ENCODE measurements at regions of chr1 and their contacts with region 1.

Region 1: GRCh38 chr1:214213136-214213535 is 67.8 kb upstream of the SMYD2 start:
- DNase-seq: no peak
- H3K4me3 ChIP-seq: no peak overlapping the region
- H3K27ac ChIP-seq: no peak overlapping the region
- H3K4me1 ChIP-seq: peaks cover 0 to 6% (median 5%) of the 10 kb centered on the region in 4 experiments
- H3K27me3 ChIP-seq: peaks cover 0 to 12% (median 6%) of the 10 kb centered on the region in 5 experiments

Region 2: GRCh38 chr1:214186103-214186824 is 26.9 kb before region 1 on chr1:
- CTCF ChIA-PET with region 1: no interaction called
- POLR2A ChIA-PET with region 1: no interaction called
- DNase-seq: peak in 2 of 3 donors; percentile 4 to 11
- H3K4me3 ChIP-seq: no peak overlapping the region
- H3K27ac ChIP-seq: no peak overlapping the region
- H3K4me1 ChIP-seq: peaks cover 0 to 8% (median 5%) of the 10 kb centered on the region in 4 experiments
- H3K27me3 ChIP-seq: peaks cover 22 to 70% (median 34%) of the 10 kb centered on the region in 5 experiments

Region 3: GRCh38 chr1:214198571-214198970 is 14.6 kb before region 1 on chr1:
- CTCF ChIA-PET with region 1: interaction called, 12 read pairs
- POLR2A ChIA-PET with region 1: no interaction called
- DNase-seq: peak in 2 of 3 donors; percentile 36 to 38
- H3K4me3 ChIP-seq: no peak overlapping the region
- H3K27ac ChIP-seq: no peak overlapping the region
- H3K4me1 ChIP-seq: peaks cover 0 to 2% (median 0%) of the 10 kb centered on the region in 4 experiments
- H3K27me3 ChIP-seq: peaks cover 0 to 7% (median 2%) of the 10 kb centered on the region in 5 experiments